ENCODE measurements at regions of chr19 and their contacts with region 1.

Region 1: GRCh38 chr19:5904352-5905113 is at the start of gene VMAC:
- DNase-seq: peak; percentile 100
- H3K4me3 ChIP-seq: peak within 1 kb of the TSS; percentile 86
- H3K27ac ChIP-seq: peak within 1 kb of the TSS; percentile 96
- H3K27me3 ChIP-seq: no peaks in the 10 kb centered on the region
- CTCF ChIP-seq: no peak
- polyA plus RNA-seq, gene VMAC: 2.5 and 2.6 TPM in 2 replicates

Region 2: GRCh38 chr19:5743630-5744029 is 160.9 kb before region 1 on chr19:
- CTCF ChIA-PET with region 1: no interaction called
- POLR2A ChIA-PET with region 1: no interaction called
- DNase-seq: no peak
- H3K4me3 ChIP-seq: no peak overlapping the region
- H3K27ac ChIP-seq: no peak overlapping the region
- H3K27me3 ChIP-seq: peaks cover 4% of the 10 kb centered on the region
- CTCF ChIP-seq: no peak

Region 3: GRCh38 chr19:5782945-5783934 is 121.3 kb before region 1 on chr19:
- CTCF ChIA-PET with region 1: no interaction called
- POLR2A ChIA-PET with region 1: no interaction called
- DNase-seq: no peak
- H3K4me3 ChIP-seq: no peak overlapping the region
- H3K27ac ChIP-seq: no peak overlapping the region
- H3K27me3 ChIP-seq: no peaks in the 10 kb centered on the region
- CTCF ChIP-seq: no peak

Region 4: GRCh38 chr19:5827891-5828660 is 76.5 kb before region 1 on chr19:
- CTCF ChIA-PET with region 1: no interaction called
- POLR2A ChIA-PET with region 1: interaction called, 30 read pairs
- DNase-seq: peak; percentile 73
- H3K4me3 ChIP-seq: peak overlapping the region; percentile 79
- H3K27ac ChIP-seq: peak overlapping the region; percentile 77
- H3K27me3 ChIP-seq: peaks cover 2% of the 10 kb centered on the region
- CTCF ChIP-seq: no peak

Region 5: GRCh38 chr19:5927441-5927821 is 22.9 kb after region 1 on chr19:
- CTCF ChIA-PET with region 1: no interaction called
- POLR2A ChIA-PET with region 1: no interaction called
- DNase-seq: no peak
- H3K4me3 ChIP-seq: no peak overlapping the region
- H3K27ac ChIP-seq: no peak overlapping the region
- H3K27me3 ChIP-seq: no peaks in the 10 kb centered on the region
- CTCF ChIP-seq: no peak